Sigmoid colon (tissue), 7 donors: ENCODE measurements at regions of chr10 and their contacts with region 1.

Region 1: GRCh38 chr10:48363617-48364355 is 57.3 kb downstream of the MAPK8 start:
- DNase-seq: no peak
- H3K4me3 ChIP-seq: no peak overlapping the region
- H3K27ac ChIP-seq: no peak overlapping the region
- H3K4me1 ChIP-seq: peaks cover 0 to 34% (median 19%) of the 10 kb centered on the region in 4 donors
- H3K27me3 ChIP-seq: no peaks in the 10 kb centered on the region
- CTCF ChIP-seq: peak; percentile 20 to 57 (median 48)
- EP300 ChIP-seq: no peak
- POLR2A ChIP-seq: no peak

Region 2: DNA sequence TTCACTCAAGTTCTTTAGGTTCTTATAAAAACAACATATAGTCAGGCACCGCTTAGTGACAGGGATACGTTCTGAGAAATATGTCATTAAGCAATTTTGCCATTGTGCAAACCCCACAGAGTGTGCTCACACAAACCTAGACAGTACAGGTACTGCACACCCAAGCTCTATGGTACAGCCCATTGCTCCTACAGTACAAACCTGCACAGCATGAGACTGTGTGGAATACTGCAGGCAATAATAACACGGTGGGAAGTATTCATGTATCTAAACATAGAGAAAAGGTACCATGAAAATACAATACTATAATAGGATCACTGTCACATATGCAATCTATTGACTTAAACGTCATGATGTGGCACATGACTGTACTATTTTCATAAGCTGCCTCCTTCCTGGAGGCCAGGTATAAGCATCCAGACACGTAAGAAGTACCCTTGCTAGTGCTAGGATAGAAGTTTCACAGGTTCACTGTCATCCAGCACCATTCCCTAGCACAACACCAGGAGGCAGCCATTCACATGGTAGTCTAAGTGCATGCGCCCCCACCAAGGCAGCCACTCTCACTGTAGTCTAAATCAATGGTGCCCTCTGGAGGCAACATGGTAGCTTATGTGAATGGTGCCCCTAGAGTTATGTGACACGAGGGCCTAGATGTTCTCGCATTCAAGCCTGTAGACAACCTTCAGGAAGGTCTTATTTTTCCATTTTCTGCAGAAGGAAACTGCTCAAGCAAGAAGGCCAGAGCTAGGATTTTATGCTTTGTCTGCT is 142.5 kb after region 1 on chr10:
- intact Hi-C with region 1: loop called (anchors 10 kb)
- DNase-seq: no peak
- H3K4me3 ChIP-seq: no peak overlapping the region
- H3K27ac ChIP-seq: no peak overlapping the region
- H3K4me1 ChIP-seq: no peaks in the 10 kb centered on the region
- H3K27me3 ChIP-seq: no peaks in the 10 kb centered on the region
- CTCF ChIP-seq: no peak
- EP300 ChIP-seq: no peak
- POLR2A ChIP-seq: no peak